A673 (cell line): ENCODE measurements at regions of chr15 and their contacts with region 1.

Region 1: GRCh38 chr15:95557226-95558046 is 773.1 kb upstream of the NR2F2 start:
- DNase-seq: peak; percentile 90
- H3K4me3 ChIP-seq: peak overlapping the region; percentile 30
- H3K27ac ChIP-seq: peak overlapping the region; percentile 73
- H3K4me1 ChIP-seq: peaks cover 22% of the 10 kb centered on the region
- H3K27me3 ChIP-seq: no peaks in the 10 kb centered on the region
- CTCF ChIP-seq: no peak

Region 2: DNA sequence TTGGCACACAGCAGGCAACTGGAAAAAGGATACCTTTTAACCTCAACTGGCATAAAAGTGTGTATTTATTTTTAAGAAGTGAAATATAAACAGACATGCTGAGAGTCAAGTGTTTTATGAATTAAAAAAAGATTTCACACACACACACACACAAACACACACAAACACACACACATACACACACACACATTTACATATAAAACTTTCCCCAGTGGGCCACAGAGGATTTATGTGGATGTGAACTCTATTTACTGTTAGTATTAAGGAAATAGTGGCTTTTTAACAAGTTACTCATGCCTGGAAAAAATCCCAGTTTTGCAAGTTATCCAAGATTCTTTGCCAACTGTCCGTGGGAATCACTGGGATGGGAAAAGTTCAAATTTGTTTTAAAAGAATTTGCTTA is 47.2 kb after region 1 on chr15:
- CTCF ChIA-PET with region 1: no interaction called
- POLR2A ChIA-PET with region 1: no interaction called
- intact Hi-C with region 1: loop called (anchors 2 kb)
- DNase-seq: peak; percentile 45
- H3K4me3 ChIP-seq: no peak overlapping the region
- H3K27ac ChIP-seq: peak overlapping the region; percentile 78
- H3K4me1 ChIP-seq: peaks cover 50% of the 10 kb centered on the region
- H3K27me3 ChIP-seq: no peaks in the 10 kb centered on the region
- CTCF ChIP-seq: no peak

Region 3: GRCh38 chr15:96428742-96429141 is 871.3 kb after region 1 on chr15:
- CTCF ChIA-PET with region 1: no interaction called
- POLR2A ChIA-PET with region 1: no interaction called
- intact Hi-C with region 1: no loop called
- DNase-seq: peak; percentile 50
- H3K4me3 ChIP-seq: no peak overlapping the region
- H3K27ac ChIP-seq: no peak overlapping the region
- H3K4me1 ChIP-seq: no peaks in the 10 kb centered on the region
- H3K27me3 ChIP-seq: no peaks in the 10 kb centered on the region
- CTCF ChIP-seq: no peak